Endothelial cell of umbilical vein (primary cell): ENCODE measurements at regions of chr11 and their contacts with region 1.

Region 1: DNA sequence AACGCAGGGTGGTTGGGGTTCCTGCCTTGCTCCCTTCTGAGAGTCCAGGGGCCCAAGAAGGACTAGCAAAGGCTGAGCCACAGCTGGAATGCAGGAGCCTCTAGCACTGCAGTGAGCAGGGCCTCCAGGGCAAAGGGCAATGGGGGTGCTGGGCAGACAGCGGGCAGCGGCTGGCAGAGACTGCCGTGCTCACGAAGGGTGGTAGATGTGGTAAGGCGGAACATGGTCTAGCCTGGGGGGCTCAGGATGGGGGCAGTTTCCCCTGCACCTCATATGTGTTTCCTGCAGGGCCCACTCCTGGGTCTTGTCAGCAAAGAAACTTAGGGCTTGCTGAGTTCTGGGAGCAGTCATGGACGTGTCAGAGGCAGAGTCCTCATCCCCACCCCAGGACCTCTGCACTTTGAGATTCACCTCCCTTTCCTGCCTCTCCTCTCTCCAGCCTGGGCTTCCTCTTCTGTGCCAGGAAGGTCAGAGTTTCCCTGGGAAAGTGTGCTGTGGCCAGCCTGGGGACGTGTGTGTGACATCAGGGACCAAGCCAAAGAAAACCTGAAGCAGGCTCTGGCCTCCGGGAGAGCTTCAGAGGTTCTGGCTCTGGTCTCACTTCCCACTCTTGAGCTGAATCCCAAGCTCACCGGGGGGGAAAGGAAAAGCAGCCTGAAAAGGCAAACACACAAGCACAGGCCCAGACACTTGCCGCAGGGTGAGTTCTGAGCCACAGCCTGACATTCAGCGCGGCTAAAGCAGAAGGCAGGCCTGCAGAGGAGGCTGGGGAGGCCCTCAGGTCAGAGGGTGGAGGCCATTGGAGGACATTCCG is 4.4 kb downstream of the MOGAT2 start:
- DNase-seq: no peak
- H3K4me3 ChIP-seq: no peak overlapping the region
- H3K27ac ChIP-seq: no peak overlapping the region
- H3K4me1 ChIP-seq: no peaks in the 10 kb centered on the region
- H3K27me3 ChIP-seq: peaks cover 0 to 2% of the 10 kb centered on the region in 2 experiments
- CTCF ChIP-seq: no peak
- POLR2A ChIP-seq: no peak

Region 2: GRCh38 chr11:75301601-75302345 is 420.3 kb before region 1 on chr11:
- CTCF ChIA-PET with region 1: no interaction called
- POLR2A ChIA-PET with region 1: no interaction called
- dilution Hi-C with region 1: no loop called
- intact Hi-C with region 1: no loop called
- DNase-seq: peak; percentile 46
- H3K4me3 ChIP-seq: no peak overlapping the region
- H3K27ac ChIP-seq: no peak overlapping the region
- H3K4me1 ChIP-seq: peaks cover 19% of the 10 kb centered on the region
- H3K27me3 ChIP-seq: no peaks in the 10 kb centered on the region
- CTCF ChIP-seq: no peak
- POLR2A ChIP-seq: no peak

Region 3: DNA sequence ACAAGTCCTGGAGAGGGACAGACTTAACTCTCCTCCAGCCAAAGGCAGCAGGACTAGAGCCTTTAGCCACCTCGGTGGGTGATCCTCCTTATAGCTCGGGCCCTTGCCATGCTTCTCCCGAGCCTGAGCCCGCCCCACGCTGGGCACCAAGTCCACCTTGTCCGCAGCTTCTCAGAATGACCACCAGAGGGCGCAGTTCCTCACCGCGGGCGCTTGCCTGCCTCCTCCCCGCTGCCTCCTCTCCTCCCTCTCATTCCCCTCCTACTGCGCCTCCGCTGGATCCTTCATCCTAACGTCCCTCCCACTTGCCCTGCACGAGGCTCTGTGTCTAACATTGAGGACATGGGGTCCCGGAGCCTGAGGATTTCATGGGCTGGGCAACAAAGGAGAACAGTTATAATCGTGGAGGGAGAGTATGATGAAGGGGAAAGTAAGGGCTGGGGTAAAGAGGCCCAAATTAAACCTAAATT is 15.8 kb before region 1 on chr11:
- CTCF ChIA-PET with region 1: interaction called, 15 read pairs
- POLR2A ChIA-PET with region 1: no interaction called
- dilution Hi-C with region 1: no loop called
- intact Hi-C with region 1: no loop called
- DNase-seq: peak; percentile 72
- H3K4me3 ChIP-seq: no peak overlapping the region
- H3K27ac ChIP-seq: no peak overlapping the region
- H3K4me1 ChIP-seq: no peaks in the 10 kb centered on the region
- H3K27me3 ChIP-seq: peaks cover 0 to 3% of the 10 kb centered on the region in 2 experiments
- CTCF ChIP-seq: peak; percentile 94 to 98
- POLR2A ChIP-seq: no peak

Region 4: GRCh38 chr11:75768112-75768908 is 46.2 kb after region 1 on chr11 and contains the start of gene DGAT2:
- CTCF ChIA-PET with region 1: interaction called, 3 read pairs
- POLR2A ChIA-PET with region 1: no interaction called
- dilution Hi-C with region 1: no loop called
- intact Hi-C with region 1: loop called (anchors 1 kb)
- DNase-seq: peak; percentile 79
- H3K4me3 ChIP-seq: peak within 1 kb of the TSS; percentile 9 to 43 (median 25)
- H3K27ac ChIP-seq: peak within 1 kb of the TSS; percentile 19
- H3K4me1 ChIP-seq: peaks cover 9% of the 10 kb centered on the region
- H3K27me3 ChIP-seq: peaks cover 19 to 25% of the 10 kb centered on the region in 2 experiments
- CTCF ChIP-seq: peak in 1 of 2 donors; percentile 29
- POLR2A ChIP-seq: no peak
- total RNA-seq, gene DGAT2: 0.55 TPM in 2 replicates

Region 5: GRCh38 chr11:75814686-75815344 is 92.8 kb after region 1 on chr11 and contains the start of gene UVRAG:
- CTCF ChIA-PET with region 1: interaction called, 12 read pairs
- POLR2A ChIA-PET with region 1: no interaction called
- dilution Hi-C with region 1: no loop called
- intact Hi-C with region 1: no loop called
- DNase-seq: peak; percentile 100
- H3K4me3 ChIP-seq: peak within 1 kb of the TSS; percentile 90 to 95 (median 93)
- H3K27ac ChIP-seq: peak within 1 kb of the TSS; percentile 88
- H3K4me1 ChIP-seq: peaks cover 35% of the 10 kb centered on the region
- H3K27me3 ChIP-seq: no peaks in the 10 kb centered on the region
- CTCF ChIP-seq: no peak
- POLR2A ChIP-seq: peak; percentile 82
- total RNA-seq, gene UVRAG: 65.6 and 67.3 TPM in 2 replicates

Region 6: GRCh38 chr11:75862437-75862836 is 140.4 kb after region 1 on chr11:
- CTCF ChIA-PET with region 1: interaction called, 28 read pairs
- POLR2A ChIA-PET with region 1: no interaction called
- dilution Hi-C with region 1: no loop called
- intact Hi-C with region 1: loop called (anchors 1 kb)
- DNase-seq: no peak
- H3K4me3 ChIP-seq: no peak overlapping the region
- H3K27ac ChIP-seq: no peak overlapping the region
- H3K4me1 ChIP-seq: no peaks in the 10 kb centered on the region
- H3K27me3 ChIP-seq: no peaks in the 10 kb centered on the region
- CTCF ChIP-seq: no peak
- POLR2A ChIP-seq: no peak

Region 7: GRCh38 chr11:75867775-75868374 is 145.8 kb after region 1 on chr11:
- CTCF ChIA-PET with region 1: interaction called, 28 read pairs
- POLR2A ChIA-PET with region 1: no interaction called
- dilution Hi-C with region 1: no loop called
- intact Hi-C with region 1: loop called (anchors 1 kb)
- DNase-seq: peak; percentile 71
- H3K4me3 ChIP-seq: no peak overlapping the region
- H3K27ac ChIP-seq: no peak overlapping the region
- H3K4me1 ChIP-seq: peaks cover 20% of the 10 kb centered on the region
- H3K27me3 ChIP-seq: no peaks in the 10 kb centered on the region
- CTCF ChIP-seq: peak; percentile 47 to 58
- POLR2A ChIP-seq: no peak

Region 8: DNA sequence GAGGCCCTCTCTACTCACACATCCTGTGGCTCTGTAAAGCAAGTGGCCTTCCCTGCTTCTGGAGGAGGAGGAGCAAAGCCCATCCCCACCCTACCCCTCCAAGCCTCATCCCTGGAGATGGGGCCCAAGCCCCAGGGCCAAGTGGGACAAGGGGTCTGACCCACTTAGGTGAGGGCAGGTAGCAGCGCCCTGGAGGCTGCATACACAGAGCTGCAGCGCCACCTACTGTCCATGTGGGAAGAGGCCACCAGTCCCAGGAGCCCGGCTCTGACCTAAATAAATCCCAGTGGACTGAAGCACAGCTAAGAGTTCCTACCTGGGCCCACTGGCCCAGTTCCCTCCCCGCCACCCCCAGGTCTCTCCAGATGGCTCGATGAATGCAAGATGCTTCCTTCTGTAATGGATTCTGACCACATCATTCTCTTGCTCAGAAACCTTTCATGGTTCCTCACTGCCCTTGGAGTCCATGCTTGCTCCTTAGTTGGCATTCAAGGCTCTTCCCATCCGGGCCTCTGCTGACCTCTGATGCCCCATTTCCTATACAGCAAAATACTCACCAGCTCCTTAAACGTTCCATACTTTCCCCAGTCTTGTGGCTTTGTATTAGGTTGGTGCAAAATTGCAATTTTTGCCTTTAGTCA is 596.8 kb after region 1 on chr11:
- CTCF ChIA-PET with region 1: interaction called, 9 read pairs
- POLR2A ChIA-PET with region 1: no interaction called
- dilution Hi-C with region 1: no loop called
- intact Hi-C with region 1: loop called (anchors 5 kb)
- DNase-seq: peak; percentile 74
- H3K4me3 ChIP-seq: no peak overlapping the region
- H3K27ac ChIP-seq: no peak overlapping the region
- H3K4me1 ChIP-seq: no peaks in the 10 kb centered on the region
- H3K27me3 ChIP-seq: peaks cover 16 to 23% of the 10 kb centered on the region in 2 experiments
- CTCF ChIP-seq: peak; percentile 84 to 94
- POLR2A ChIP-seq: no peak